ENCODE measurements at regions of chr18 and their contacts with region 1.

Region 1: DNA sequence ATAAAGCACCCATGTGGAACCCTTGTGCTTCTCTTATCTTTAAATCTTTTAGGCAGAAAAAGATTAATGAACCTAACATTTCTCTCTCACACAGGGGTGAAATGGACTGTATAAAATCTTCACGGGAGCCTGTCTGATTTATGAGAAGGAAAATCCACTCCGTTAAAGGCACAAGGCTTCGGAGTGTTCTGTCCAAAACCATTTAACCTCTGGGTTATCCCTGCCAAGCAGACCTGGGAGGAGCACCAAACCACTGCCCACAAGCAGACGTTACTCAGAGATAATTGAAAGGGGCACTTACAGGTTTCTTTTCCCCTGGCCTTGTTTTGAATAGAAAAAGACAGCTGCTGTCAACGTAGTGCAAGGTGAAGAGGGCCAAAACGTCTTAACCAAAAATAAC is 184.4 kb upstream of the DOK6 start:
- DNase-seq: no peak
- ATAC-seq: no peak
- H3K4me3 Mint-ChIP-seq: no peak overlapping the region
- H3K27ac Mint-ChIP-seq: no peak overlapping the region
- H3K4me1 Mint-ChIP-seq: no peaks in the 10 kb centered on the region
- H3K27me3 Mint-ChIP-seq: no peaks in the 10 kb centered on the region
- CTCF ChIP-seq: no peak

Region 2: DNA sequence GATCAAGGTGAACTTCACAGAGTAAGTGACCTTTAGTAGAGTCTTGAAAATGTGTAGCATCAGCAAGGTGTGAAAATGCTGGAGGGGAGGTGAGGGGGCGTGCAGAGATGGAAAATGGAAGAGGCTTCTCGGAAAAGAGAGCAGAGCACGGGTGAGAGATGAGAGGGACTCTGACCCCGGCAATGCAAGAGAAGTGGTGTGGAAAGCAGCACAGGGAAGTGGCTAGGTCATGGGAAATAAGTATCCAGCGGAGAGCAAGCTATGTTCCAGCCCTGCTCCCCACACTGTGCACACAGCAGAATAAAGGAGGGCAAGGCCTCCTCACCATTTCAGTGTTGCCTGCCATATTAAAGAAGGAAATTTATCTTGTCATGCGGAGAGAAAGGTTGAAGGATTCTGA is 57.4 kb before region 1 on chr18:
- CTCF ChIA-PET with region 1: no interaction called
- POLR2A ChIA-PET with region 1: no interaction called
- intact Hi-C with region 1: loop called (anchors 10 kb)
- DNase-seq: no peak
- ATAC-seq: no peak
- H3K4me3 Mint-ChIP-seq: no peak overlapping the region
- H3K27ac Mint-ChIP-seq: no peak overlapping the region
- H3K4me1 Mint-ChIP-seq: no peaks in the 10 kb centered on the region
- H3K27me3 Mint-ChIP-seq: no peaks in the 10 kb centered on the region
- CTCF ChIP-seq: no peak

Region 3: GRCh38 chr18:69265656-69266055 is 49.3 kb after region 1 on chr18:
- CTCF ChIA-PET with region 1: no interaction called
- POLR2A ChIA-PET with region 1: no interaction called
- intact Hi-C with region 1: loop called (anchors 10 kb)
- DNase-seq: no peak
- ATAC-seq: no peak
- H3K4me3 Mint-ChIP-seq: no peak overlapping the region
- H3K27ac Mint-ChIP-seq: no peak overlapping the region
- H3K4me1 Mint-ChIP-seq: no peaks in the 10 kb centered on the region
- H3K27me3 Mint-ChIP-seq: no peaks in the 10 kb centered on the region
- CTCF ChIP-seq: no peak